ENCODE measurements at regions of chr1 and their contacts with region 1.

Region 1: DNA sequence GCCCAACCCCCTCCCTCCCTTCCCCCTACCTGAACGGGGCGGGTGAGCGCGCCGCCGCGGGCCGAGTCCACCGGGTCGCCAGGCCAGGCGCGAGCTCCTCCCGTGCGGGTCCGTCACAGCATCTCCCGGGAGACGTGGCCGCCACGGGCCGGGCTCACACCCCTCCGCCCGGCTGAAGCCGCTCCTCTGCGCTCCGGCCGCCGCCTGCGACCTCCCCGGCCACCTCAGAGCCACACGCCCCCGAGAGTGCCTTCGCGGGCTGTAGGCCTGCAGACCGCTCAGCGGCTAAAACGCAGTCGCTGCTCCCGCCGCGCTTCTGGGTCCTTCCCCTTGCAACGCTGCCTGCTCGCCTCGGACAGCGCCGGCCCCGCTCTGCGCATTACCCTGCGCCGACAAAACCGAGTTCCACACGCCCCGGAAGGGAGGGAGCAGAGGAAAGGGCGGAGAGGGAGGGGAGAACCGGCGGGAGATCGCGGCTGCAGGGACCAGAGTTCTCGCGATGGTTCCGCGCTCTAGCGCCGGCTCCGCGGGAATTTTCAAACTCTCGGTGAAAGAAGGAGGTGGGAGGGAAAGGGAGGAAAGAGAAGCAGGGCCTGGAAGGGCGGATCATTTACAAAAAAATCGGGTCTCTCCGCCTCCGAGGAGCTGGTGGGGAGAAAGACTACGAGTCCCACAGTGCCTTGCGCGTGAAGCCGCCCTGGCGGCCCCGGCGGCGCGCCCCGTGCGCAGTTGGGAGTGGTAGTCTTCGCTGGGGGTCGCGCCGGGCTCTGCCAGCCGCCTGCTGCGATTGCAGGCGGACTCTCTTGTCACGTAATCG is at the start of gene AHCTF1:
- DNase-seq: peak; percentile 95 to 97
- ATAC-seq: peak; percentile 98 to 99 (median 99)
- H3K4me3 ChIP-seq: peak within 1 kb of the TSS; percentile 58 to 98 (median 90)
- H3K27ac ChIP-seq: peak within 1 kb of the TSS; percentile 82 to 98 (median 96)
- H3K4me1 ChIP-seq: peaks cover 0 to 34% (median 23%) of the 10 kb centered on the region in 9 donors
- H3K27me3 ChIP-seq: no peaks in the 10 kb centered on the region
- CTCF ChIP-seq: peak in 1 of 9 donors; percentile 10
- total RNA-seq, gene AHCTF1: 16.8 to 29.2 (median 19.2) TPM

Region 2: GRCh38 chr1:246947255-246947654 is 15.5 kb after region 1 on chr1:
- intact Hi-C with region 1: loop called in 1 of 10 experiments (anchors 1 kb)
- DNase-seq: peak in 1 of 2 donors; percentile 60
- ATAC-seq: peak; percentile 43 to 98 (median 96)
- H3K4me3 ChIP-seq: no peak overlapping the region
- H3K27ac ChIP-seq: peak overlapping the region; percentile 3 to 78 (median 66)
- H3K4me1 ChIP-seq: peaks cover 0 to 20% (median 8%) of the 10 kb centered on the region in 9 donors
- H3K27me3 ChIP-seq: no peaks in the 10 kb centered on the region
- CTCF ChIP-seq: no peak

Region 3: DNA sequence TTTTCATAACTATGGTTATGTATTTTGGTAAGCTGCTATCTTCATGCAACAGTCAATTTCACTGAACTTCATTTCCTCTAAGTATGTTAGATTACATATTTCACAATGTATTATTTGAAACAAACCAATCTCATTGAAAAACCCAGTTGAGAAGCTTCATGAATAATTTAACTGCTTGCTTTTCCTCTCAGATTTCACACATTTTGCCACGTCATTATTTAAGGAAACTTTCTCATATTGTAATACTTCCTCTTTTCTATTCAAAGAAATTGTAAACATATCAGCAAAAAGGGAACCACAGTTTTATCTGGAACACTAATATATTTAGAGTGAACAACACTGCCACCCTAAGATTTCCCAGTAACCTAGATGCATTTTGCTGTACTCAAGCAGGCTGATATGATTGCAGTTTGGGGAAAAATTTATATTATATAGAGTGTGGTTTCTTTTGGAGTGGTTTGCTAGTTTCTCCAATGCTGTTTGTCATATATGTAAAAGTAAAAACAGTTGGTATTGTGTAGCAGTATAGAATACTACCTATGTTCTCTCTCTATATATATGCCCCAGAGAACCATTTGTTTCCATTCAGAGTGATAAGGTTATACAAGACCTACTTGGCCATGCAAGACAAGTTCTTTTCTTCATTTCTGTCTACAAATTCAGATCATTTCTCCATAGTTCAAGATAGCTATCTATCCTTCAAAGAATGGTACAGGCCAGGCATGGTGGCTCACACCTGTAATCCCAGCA is 28.4 kb after region 1 on chr1:
- intact Hi-C with region 1: no loop called
- DNase-seq: no peak
- ATAC-seq: peak in 1 of 8 donors; percentile 58
- H3K4me3 ChIP-seq: peak overlapping the region in 1 of 10 donors; percentile 6
- H3K27ac ChIP-seq: peak overlapping the region in 1 of 10 donors; percentile 88
- H3K4me1 ChIP-seq: peaks cover 0 to 38% (median 0%) of the 10 kb centered on the region in 9 donors
- H3K27me3 ChIP-seq: no peaks in the 10 kb centered on the region
- CTCF ChIP-seq: peak in 4 of 9 donors; percentile 23 to 27 (median 25)

Region 4: GRCh38 chr1:247241687-247242086 is 309.9 kb after region 1 on chr1:
- intact Hi-C with region 1: no loop called
- DNase-seq: no peak
- ATAC-seq: no peak
- H3K4me3 ChIP-seq: no peak overlapping the region
- H3K27ac ChIP-seq: no peak overlapping the region
- H3K4me1 ChIP-seq: no peaks in the 10 kb centered on the region
- H3K27me3 ChIP-seq: no peaks in the 10 kb centered on the region
- CTCF ChIP-seq: no peak

Region 5: GRCh38 chr1:247367786-247368422 is 436.1 kb after region 1 on chr1:
- intact Hi-C with region 1: no loop called
- DNase-seq: no peak
- ATAC-seq: peak in 6 of 8 donors; percentile 34 to 69 (median 54)
- H3K4me3 ChIP-seq: no peak overlapping the region
- H3K27ac ChIP-seq: peak overlapping the region in 2 of 10 donors; percentile 21
- H3K4me1 ChIP-seq: peaks cover 0 to 11% (median 1%) of the 10 kb centered on the region in 9 donors
- H3K27me3 ChIP-seq: peaks cover 0 to 28% (median 3%) of the 10 kb centered on the region in 7 donors
- CTCF ChIP-seq: no peak

Measured in heart right ventricle (tissue), 16 donors.